ENCODE measurements at regions of chr7 and their contacts with region 1.

Region 1: DNA sequence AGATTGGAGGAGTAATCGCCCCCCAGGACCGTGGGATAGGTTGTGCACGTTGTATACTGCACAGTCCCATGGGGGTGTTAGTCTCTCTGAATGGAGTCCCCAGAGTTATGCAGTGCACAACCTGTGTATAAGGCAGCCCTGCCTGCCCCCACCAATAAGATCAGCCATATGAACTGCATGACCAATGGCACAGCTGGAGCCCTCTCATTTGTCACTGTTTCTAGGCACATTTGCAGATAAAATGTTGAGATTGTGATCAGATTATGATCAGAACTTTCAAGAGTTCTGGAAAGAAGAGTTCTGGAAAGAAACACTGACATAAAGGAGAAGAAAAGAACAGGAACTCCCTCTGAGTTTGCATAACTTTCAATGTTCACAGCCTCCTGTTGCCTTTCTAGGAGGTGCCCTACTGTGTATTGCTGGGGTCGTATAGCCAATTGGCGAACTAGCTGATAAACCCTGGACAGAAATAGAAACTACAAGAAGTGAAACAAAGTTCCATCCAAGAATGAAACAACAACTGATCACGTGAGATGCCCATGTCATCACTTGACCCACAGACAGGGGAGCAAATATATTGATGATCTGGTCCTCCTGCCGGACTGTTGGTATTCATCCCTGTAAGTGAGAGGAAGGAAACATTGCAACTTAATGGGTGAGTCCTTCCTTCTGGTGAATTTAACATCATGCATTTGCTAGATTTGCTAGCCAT is 49.6 kb upstream of the TOMM7 start:
- DNase-seq: no peak
- ATAC-seq: peak in 1 of 2 experiments; percentile 69; a peak in 3 of 6 replicates
- H3K4me3 ChIP-seq: no peak overlapping the region
- H3K27ac ChIP-seq: no peak overlapping the region
- H3K4me1 ChIP-seq: no peaks in the 10 kb centered on the region
- CTCF ChIP-seq: no peak
- EP300 ChIP-seq: no peak
- POLR2A ChIP-seq: no peak
- RAD21 ChIP-seq: no peak

Region 2: GRCh38 chr7:23298885-23299769 is 426.9 kb after region 1 on chr7 and contains the start of gene MALSU1:
- CTCF ChIA-PET with region 1: no interaction called
- POLR2A ChIA-PET with region 1: interaction called, 12 read pairs
- DNase-seq: peak; percentile 92 to 97
- ATAC-seq: peak; percentile 95 to 96
- H3K4me3 ChIP-seq: peak within 1 kb of the TSS; percentile 79
- H3K27ac ChIP-seq: peak within 1 kb of the TSS; percentile 87 to 96
- H3K4me1 ChIP-seq: peaks cover 36% of the 10 kb centered on the region
- CTCF ChIP-seq: no peak
- EP300 ChIP-seq: no peak
- POLR2A ChIP-seq: peak; percentile 96
- RAD21 ChIP-seq: no peak
- polyA plus RNA-seq, gene MALSU1: 93.6 and 122 TPM in 2 replicates